ENCODE measurements at regions of chr2 and their contacts with region 1.

Region 1: DNA sequence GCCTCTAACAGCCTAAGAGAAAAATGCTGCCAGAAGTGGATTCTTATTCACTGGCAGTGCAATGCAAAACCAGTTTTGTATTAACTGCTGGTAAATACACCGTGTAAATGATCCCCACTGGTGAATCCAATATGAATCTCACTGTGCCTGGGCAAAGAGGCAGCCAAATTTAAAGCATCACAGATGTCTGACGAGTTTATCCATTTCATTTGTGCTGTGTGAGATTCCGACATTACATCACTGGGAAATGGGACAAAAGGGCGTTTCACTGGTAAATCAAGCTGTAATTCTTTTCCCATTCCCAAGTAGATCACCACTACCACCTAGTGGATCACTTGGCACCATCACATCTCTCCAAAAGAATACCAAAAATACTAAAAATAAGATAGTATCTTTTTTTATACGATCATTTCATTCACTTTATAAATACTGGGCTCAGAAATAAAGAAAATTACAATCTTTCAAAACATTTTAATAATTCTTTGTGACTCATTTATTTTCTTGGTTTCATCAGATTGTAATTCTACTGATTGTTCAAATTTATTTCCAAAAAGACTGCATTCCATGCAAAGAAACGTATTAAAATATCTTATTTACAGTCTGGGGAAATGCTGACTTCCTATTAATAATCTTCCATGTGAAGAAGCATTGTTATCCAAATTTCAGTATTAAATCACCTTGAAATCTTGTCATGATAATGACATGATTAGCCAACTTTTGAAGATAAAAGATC is 125.6 kb downstream of the GRB14 start:
- DNase-seq: no peak
- H3K4me3 ChIP-seq: no peak overlapping the region
- CTCF ChIP-seq: peak; percentile 45

Region 2: DNA sequence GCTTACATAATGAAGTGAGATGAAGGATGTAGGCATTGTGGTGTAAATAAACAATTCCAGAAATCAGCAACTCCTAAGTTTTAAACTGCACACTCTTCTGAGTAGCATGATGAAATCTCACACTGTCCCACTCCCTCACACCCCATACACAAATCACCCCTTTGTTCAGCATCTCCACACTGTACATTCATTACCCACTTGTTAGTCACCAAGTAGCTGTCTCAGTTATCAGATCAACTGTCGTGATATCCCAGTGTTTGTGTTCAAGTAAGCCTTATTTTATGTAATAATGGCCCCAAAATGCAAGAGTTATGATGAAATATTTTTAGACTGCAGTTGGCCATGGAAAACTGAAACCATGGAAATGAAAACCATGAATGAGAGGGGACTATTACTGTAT is 10.1 kb before region 1 on chr2:
- CTCF ChIA-PET with region 1: interaction called, 14 read pairs
- POLR2A ChIA-PET with region 1: no interaction called
- DNase-seq: no peak
- H3K4me3 ChIP-seq: no peak overlapping the region
- CTCF ChIP-seq: no peak

Region 3: DNA sequence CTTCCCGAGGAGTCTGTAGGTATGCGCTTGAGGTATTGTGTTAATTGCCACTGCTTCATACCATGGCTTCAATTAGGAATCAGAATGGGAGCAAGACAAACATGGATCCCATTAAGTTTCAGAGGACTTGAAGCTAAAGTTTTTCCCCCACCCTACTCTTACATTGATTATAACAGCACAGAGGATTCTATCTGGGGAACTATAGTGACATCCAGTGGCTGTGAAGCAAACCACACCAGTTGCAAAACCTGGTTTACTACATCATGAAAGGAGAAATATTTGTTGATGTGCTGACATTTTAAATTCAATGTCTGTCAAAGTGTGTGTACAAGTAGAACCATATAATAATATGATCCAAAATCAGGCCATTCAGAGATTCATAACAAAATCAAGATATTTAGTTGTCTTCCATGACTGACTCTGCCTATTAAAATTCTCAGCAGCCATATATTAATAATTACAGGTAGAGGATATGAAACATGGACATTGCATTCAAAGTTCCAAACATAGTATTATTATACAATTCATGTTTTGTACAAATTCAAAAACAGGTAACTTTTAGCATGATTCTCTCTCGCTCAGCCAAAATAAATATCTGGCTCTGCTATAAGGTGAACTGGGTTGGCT is 42.7 kb after region 1 on chr2:
- CTCF ChIA-PET with region 1: interaction called, 12 read pairs
- POLR2A ChIA-PET with region 1: no interaction called
- DNase-seq: no peak
- H3K4me3 ChIP-seq: no peak overlapping the region
- CTCF ChIP-seq: peak; percentile 59